ENCODE measurements at regions of chr7 and their contacts with region 1.

Region 1: DNA sequence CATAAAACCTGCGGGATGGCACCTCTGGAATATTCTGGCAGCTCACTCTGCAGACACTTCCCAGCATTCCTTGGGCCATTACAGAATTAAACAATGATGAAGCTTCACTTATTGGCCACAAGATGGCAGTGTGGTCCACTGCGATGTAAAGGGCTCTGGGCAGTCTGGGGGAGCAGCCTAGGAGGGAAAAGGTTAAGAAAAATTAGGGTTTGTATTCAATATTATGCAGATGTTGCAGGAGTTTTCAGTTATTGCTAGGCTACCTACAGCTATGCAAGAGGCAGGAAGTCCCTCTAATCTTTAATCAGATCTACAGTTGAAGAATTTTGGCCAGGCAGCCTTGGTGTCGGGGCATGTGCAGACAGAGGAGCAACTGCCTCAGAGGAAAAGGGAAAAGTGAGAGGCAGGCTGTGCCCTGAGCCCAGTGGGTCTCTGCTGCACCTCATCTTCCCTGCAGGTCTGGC is 233.2 kb upstream of the PRSS1 start:
- DNase-seq: peak in 1 of 2 donors; percentile 81
- ATAC-seq: peak; percentile 77 to 96 (median 85)
- H3K4me3 ChIP-seq: no peak overlapping the region
- H3K4me3 Mint-ChIP-seq: no peak overlapping the region
- H3K27ac ChIP-seq: no peak overlapping the region
- H3K27ac Mint-ChIP-seq: no peak overlapping the region
- H3K4me1 ChIP-seq: no peaks in the 10 kb centered on the region
- H3K4me1 Mint-ChIP-seq: peaks cover 5 to 7% of the 10 kb centered on the region in 2 donors
- H3K27me3 ChIP-seq: no peaks in the 10 kb centered on the region
- H3K27me3 Mint-ChIP-seq: peaks cover 4 to 10% of the 10 kb centered on the region in 2 donors
- CTCF ChIP-seq: peak; percentile 72

Region 2: GRCh38 chr7:142463401-142463850 is 52.6 kb before region 1 on chr7:
- intact Hi-C with region 1: loop called (anchors 5 kb)
- DNase-seq: peak in 1 of 2 donors; percentile 58
- ATAC-seq: peak in 1 of 3 donors; percentile 12
- H3K4me3 ChIP-seq: no peak overlapping the region
- H3K4me3 Mint-ChIP-seq: no peak overlapping the region
- H3K27ac ChIP-seq: no peak overlapping the region
- H3K27ac Mint-ChIP-seq: no peak overlapping the region
- H3K4me1 ChIP-seq: peaks cover 9% of the 10 kb centered on the region
- H3K4me1 Mint-ChIP-seq: peaks cover 0 to 6% of the 10 kb centered on the region in 2 donors
- H3K27me3 ChIP-seq: no peaks in the 10 kb centered on the region
- H3K27me3 Mint-ChIP-seq: peaks cover 4 to 10% of the 10 kb centered on the region in 2 donors
- CTCF ChIP-seq: no peak

Region 3: DNA sequence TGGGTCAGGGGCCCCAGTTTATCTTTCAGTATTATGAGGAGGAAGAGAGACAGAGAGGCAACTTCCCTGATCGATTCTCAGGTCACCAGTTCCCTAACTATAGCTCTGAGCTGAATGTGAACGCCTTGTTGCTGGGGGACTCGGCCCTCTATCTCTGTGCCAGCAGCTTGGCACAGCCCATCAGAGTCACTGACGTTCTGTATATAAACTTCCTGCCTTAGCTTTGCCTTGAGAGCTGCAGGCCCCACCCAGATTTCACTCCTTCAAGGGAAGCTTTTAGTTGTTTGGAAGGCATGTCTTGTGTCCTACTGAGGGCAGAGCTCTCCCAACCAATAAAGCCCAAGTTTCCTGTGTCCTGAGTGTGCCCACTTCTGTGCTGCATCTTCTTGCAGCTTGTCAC is 15.7 kb before region 1 on chr7:
- intact Hi-C with region 1: loop called (anchors 1 kb)
- DNase-seq: peak in 1 of 2 donors; percentile 61
- ATAC-seq: no peak
- H3K4me3 ChIP-seq: no peak overlapping the region
- H3K4me3 Mint-ChIP-seq: no peak overlapping the region
- H3K27ac ChIP-seq: no peak overlapping the region
- H3K27ac Mint-ChIP-seq: no peak overlapping the region
- H3K4me1 ChIP-seq: no peaks in the 10 kb centered on the region
- H3K4me1 Mint-ChIP-seq: peaks cover 9 to 12% of the 10 kb centered on the region in 2 donors
- H3K27me3 ChIP-seq: peaks cover 4% of the 10 kb centered on the region
- H3K27me3 Mint-ChIP-seq: peaks cover 12 to 14% of the 10 kb centered on the region in 2 donors
- CTCF ChIP-seq: no peak

Measured in natural killer cell (primary cell).